AG04449 (cell line): ENCODE measurements at regions of chr3 and their contacts with region 1.

Region 1: DNA sequence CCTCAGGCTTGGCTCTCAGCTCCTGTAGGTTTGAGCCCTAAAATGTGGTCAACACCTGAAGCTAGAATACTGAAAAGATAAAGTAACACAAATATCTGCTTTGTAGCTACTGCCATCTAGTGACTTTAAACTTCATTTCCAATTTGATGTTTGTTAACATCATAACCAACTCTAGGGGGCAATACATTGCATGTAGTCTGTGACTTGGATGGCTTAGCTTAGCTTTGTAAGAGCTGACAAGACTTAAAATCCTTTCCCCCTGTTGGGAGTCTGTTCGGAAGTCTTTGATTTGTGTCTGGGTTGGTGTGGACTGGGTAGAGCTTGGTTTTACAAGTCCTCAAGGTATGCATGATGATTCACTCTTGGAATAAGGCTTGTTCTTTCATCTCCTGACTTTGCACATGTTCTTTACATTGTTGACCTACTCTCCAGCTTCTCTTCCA is 51.7 kb downstream of the SCN11A start:
- DNase-seq: peak; percentile 24
- H3K4me3 ChIP-seq: no peak overlapping the region
- CTCF ChIP-seq: peak; percentile 77

Region 2: DNA sequence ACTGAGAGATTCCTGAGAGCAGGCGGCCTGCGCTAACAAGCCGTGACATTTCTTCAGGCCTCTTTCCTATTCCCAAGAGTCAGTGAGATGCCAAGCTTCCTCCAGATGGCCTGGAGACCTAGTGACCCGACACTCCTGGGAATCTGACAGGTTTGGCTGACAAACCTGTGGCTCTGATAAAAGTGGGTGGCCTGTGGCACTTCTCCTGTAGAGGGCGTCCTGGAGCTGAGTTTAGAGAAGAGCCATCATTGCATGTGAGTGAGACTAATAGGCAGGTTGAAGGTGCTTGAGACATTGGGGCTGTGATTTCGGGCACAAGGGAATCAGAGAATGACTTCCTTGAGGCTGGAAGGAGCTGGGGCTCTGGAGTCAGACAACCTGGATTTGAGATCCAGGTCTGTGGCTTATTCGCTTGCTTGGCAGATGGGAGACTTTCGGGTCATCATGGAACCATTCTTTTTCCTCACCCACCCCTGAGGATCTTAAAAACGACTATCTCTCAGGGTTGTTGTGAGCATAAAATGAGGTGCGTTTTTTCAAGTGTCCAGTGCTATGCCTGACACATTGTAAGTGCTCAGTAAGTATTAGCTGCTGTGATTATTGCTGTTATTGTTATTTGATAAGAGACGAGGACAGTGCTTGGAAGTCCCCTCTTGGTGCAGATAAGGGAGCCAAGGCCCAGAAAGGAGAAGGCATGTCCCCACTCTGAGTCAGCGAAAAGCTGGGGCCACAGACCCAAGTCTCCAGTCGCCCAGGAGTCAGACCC is 261.2 kb before region 1 on chr3:
- CTCF ChIA-PET with region 1: interaction called, 29 read pairs
- POLR2A ChIA-PET with region 1: no interaction called
- DNase-seq: no peak
- H3K4me3 ChIP-seq: no peak overlapping the region
- CTCF ChIP-seq: peak; percentile 84

Region 3: GRCh38 chr3:38960953-38961622 is 38.9 kb before region 1 on chr3:
- CTCF ChIA-PET with region 1: interaction called, 12 read pairs
- POLR2A ChIA-PET with region 1: no interaction called
- DNase-seq: no peak
- H3K4me3 ChIP-seq: no peak overlapping the region
- CTCF ChIP-seq: peak; percentile 80

Region 4: GRCh38 chr3:38985981-38986380 is 14.0 kb before region 1 on chr3:
- CTCF ChIA-PET with region 1: interaction called, 19 read pairs
- POLR2A ChIA-PET with region 1: no interaction called
- DNase-seq: no peak
- H3K4me3 ChIP-seq: no peak overlapping the region
- CTCF ChIP-seq: no peak

Region 5: GRCh38 chr3:39028546-39028945 is 28.5 kb after region 1 on chr3:
- CTCF ChIA-PET with region 1: interaction called, 49 read pairs
- POLR2A ChIA-PET with region 1: no interaction called
- DNase-seq: no peak
- H3K4me3 ChIP-seq: no peak overlapping the region
- CTCF ChIP-seq: no peak

Region 6: GRCh38 chr3:39216176-39216790 is 216.3 kb after region 1 on chr3:
- CTCF ChIA-PET with region 1: no interaction called
- POLR2A ChIA-PET with region 1: no interaction called
- DNase-seq: no peak
- H3K4me3 ChIP-seq: no peak overlapping the region
- CTCF ChIP-seq: no peak